Endothelial cell of umbilical vein (primary cell): ENCODE measurements at regions of chr17 and their contacts with region 1.

Region 1: GRCh38 chr17:40021451-40021971 is 6.3 kb downstream of the CSF3 start:
- DNase-seq: peak; percentile 80
- H3K4me3 ChIP-seq: peak overlapping the region in 1 of 3 experiments; percentile 14
- H3K27ac ChIP-seq: peak overlapping the region; percentile 99
- H3K4me1 ChIP-seq: peaks cover 90% of the 10 kb centered on the region
- H3K27me3 ChIP-seq: no peaks in the 10 kb centered on the region
- CTCF ChIP-seq: no peak
- POLR2A ChIP-seq: peak; percentile 73

Region 2: DNA sequence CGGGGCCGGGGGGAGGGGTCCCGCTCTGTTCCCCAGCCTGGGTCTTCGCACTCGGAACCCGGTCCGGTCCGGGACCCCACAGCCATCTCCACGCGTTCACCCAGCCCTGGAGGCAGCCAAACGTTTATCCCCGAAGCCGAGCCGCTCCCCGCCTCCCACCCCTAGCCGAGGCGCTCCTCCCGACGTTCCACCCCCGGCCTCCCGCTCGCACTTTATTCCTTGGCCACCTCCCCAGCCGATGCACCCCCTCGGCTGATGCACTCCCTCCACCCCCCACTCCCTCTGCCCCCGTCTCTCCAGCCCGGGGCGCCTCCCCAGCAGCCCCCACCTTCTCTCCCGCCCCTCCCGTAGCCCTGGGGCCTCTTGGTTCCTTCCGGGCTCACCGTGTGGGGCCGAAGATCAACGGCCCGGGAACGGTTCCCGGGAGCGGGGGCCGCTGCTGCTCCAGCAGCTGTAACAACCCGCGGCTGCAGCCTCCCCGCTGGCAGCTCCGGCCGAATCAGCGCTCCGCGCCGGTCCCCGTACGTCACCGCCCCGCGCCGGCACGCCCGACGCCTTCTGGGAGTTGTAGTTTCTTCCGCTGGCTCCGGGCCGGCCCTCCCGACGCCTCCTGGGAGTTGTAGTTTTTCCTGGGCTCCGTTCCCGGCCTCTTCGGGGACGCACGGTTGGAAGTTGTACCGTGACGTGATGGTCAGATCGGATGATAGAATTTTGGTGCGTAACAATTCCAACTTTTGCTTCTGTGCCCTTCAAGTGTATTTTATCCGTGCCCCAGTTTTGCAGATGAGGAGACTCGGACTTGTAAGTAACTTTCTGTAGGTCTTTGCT is 94.2 kb before region 1 on chr17 and contains the starts of genes LRRC3C and ORMDL3:
- CTCF ChIA-PET with region 1: no interaction called
- POLR2A ChIA-PET with region 1: no interaction called
- dilution Hi-C with region 1: no loop called
- intact Hi-C with region 1: loop called (anchors 1 kb)
- DNase-seq: peak; percentile 93
- H3K4me3 ChIP-seq: peak within 1 kb of the TSS; percentile 55 to 94 (median 91)
- H3K27ac ChIP-seq: peak within 1 kb of the TSS; percentile 100
- H3K4me1 ChIP-seq: peaks cover 43% of the 10 kb centered on the region
- H3K27me3 ChIP-seq: no peaks in the 10 kb centered on the region
- CTCF ChIP-seq: no peak
- POLR2A ChIP-seq: peak; percentile 70
- total RNA-seq, gene LRRC3C: not detected in 2 replicates
- total RNA-seq, gene ORMDL3: 26.7 and 29.8 TPM in 2 replicates

Region 3: GRCh38 chr17:40098846-40099618 is 77.5 kb after region 1 on chr17:
- CTCF ChIA-PET with region 1: interaction called, 4 read pairs
- POLR2A ChIA-PET with region 1: interaction called, 4 read pairs
- dilution Hi-C with region 1: no loop called
- intact Hi-C with region 1: loop called (anchors 1 kb)
- DNase-seq: peak; percentile 97
- H3K4me3 ChIP-seq: peak overlapping the region; percentile 26 to 60 (median 48)
- H3K27ac ChIP-seq: peak overlapping the region; percentile 77
- H3K4me1 ChIP-seq: peaks cover 39% of the 10 kb centered on the region
- H3K27me3 ChIP-seq: no peaks in the 10 kb centered on the region
- CTCF ChIP-seq: no peak
- POLR2A ChIP-seq: peak; percentile 53

Region 4: GRCh38 chr17:40287494-40288369 is 266.2 kb after region 1 on chr17 and contains the start of gene CDC6:
- CTCF ChIA-PET with region 1: no interaction called
- POLR2A ChIA-PET with region 1: no interaction called
- dilution Hi-C with region 1: no loop called
- intact Hi-C with region 1: loop called (anchors 10 kb)
- DNase-seq: peak; percentile 99
- H3K4me3 ChIP-seq: peak within 1 kb of the TSS; percentile 43 to 72 (median 65)
- H3K27ac ChIP-seq: peak within 1 kb of the TSS; percentile 50
- H3K4me1 ChIP-seq: peaks cover 35% of the 10 kb centered on the region
- H3K27me3 ChIP-seq: no peaks in the 10 kb centered on the region
- CTCF ChIP-seq: no peak
- POLR2A ChIP-seq: peak; percentile 68
- total RNA-seq, gene CDC6: 49.9 and 55.2 TPM in 2 replicates